GM12878 (cell line): ENCODE measurements at regions of chr4 and their contacts with region 1.

Region 1: DNA sequence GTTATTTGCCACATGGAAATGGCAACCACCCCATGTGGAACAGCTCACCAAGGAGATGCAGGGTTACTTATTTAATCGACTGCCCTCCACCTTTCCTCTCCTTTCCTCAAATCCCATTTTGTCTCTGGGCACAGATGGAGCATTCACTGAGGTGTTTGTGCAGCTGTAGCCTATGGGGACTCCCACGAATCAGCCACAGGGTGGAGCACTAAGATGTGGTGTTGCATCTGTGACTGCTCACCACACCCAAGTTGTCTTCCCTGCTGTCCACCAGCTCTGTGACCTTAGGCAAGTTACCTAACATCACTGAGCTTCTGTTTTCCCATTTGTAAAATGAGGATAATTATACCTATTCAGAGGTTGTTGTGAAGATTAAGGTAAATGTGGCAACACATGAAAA is 252.4 kb upstream of the CPEB2 start:
- DNase-seq: no peak
- ATAC-seq: peak; percentile 85
- H3K4me3 ChIP-seq: no peak overlapping the region
- H3K27ac ChIP-seq: no peak overlapping the region
- H3K4me1 ChIP-seq: no peaks in the 10 kb centered on the region
- H3K27me3 ChIP-seq: no peaks in the 10 kb centered on the region
- CTCF ChIP-seq: peak; percentile 38 to 54 (median 40); a peak in 4 of 6 replicates
- EP300 ChIP-seq: no peak
- POLR2A ChIP-seq: no peak
- RAD21 ChIP-seq: peak; percentile 80

Region 2: DNA sequence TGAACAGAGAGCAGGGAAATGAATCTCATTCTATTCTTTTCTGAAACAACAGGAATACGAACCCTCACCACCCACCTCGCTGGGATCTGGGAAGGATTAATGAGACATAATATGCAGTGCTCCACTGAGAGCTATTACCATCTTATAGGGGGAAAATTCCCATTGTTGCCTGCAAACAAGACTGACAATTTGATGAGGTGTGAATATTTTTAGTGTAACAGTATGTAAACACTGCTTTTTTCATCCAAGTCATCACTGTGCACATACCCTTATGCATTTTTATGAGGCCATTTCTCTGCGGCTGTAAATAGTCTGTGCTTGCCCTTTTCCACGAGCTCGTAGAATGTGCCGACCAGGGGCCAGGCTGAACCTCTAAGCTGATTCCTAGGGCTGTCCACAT is 33.2 kb before region 1 on chr4:
- CTCF ChIA-PET with region 1: no interaction called
- POLR2A ChIA-PET with region 1: no interaction called
- RAD21 ChIA-PET with region 1: no interaction called
- SMC1A ChIA-PET with region 1: no interaction called
- in situ Hi-C with region 1: no loop called
- intact Hi-C with region 1: no loop called
- DNase-seq: no peak
- ATAC-seq: no peak
- H3K4me3 ChIP-seq: no peak overlapping the region
- H3K27ac ChIP-seq: no peak overlapping the region
- H3K4me1 ChIP-seq: no peaks in the 10 kb centered on the region
- H3K27me3 ChIP-seq: no peaks in the 10 kb centered on the region
- CTCF ChIP-seq: no peak
- EP300 ChIP-seq: no peak
- POLR2A ChIP-seq: no peak
- RAD21 ChIP-seq: no peak

Region 3: GRCh38 chr4:15149839-15150476 is 400.0 kb after region 1 on chr4:
- CTCF ChIA-PET with region 1: no interaction called
- POLR2A ChIA-PET with region 1: no interaction called
- RAD21 ChIA-PET with region 1: no interaction called
- SMC1A ChIA-PET with region 1: no interaction called
- in situ Hi-C with region 1: no loop called
- intact Hi-C with region 1: loop called (anchors 10 kb)
- DNase-seq: peak; percentile 19
- ATAC-seq: peak; percentile 88
- H3K4me3 ChIP-seq: no peak overlapping the region
- H3K27ac ChIP-seq: peak overlapping the region; percentile 24
- H3K4me1 ChIP-seq: peaks cover 6% of the 10 kb centered on the region
- H3K27me3 ChIP-seq: no peaks in the 10 kb centered on the region
- CTCF ChIP-seq: no peak
- EP300 ChIP-seq: no peak
- POLR2A ChIP-seq: no peak
- RAD21 ChIP-seq: no peak

Region 4: GRCh38 chr4:15162465-15163283 is 412.8 kb after region 1 on chr4:
- CTCF ChIA-PET with region 1: interaction called, 5 read pairs
- POLR2A ChIA-PET with region 1: no interaction called
- RAD21 ChIA-PET with region 1: interaction called, 10 read pairs
- SMC1A ChIA-PET with region 1: interaction called, 9 read pairs
- in situ Hi-C with region 1: no loop called
- intact Hi-C with region 1: loop called (anchors 10 kb)
- DNase-seq: no peak
- ATAC-seq: peak; percentile 73
- H3K4me3 ChIP-seq: no peak overlapping the region
- H3K27ac ChIP-seq: no peak overlapping the region
- H3K4me1 ChIP-seq: no peaks in the 10 kb centered on the region
- H3K27me3 ChIP-seq: no peaks in the 10 kb centered on the region
- CTCF ChIP-seq: peak; percentile 19 to 52 (median 31); a peak in 4 of 6 replicates
- EP300 ChIP-seq: no peak
- POLR2A ChIP-seq: no peak
- RAD21 ChIP-seq: peak; percentile 67